ENCODE measurements at regions of chr10 and their contacts with region 1.

Region 1: DNA sequence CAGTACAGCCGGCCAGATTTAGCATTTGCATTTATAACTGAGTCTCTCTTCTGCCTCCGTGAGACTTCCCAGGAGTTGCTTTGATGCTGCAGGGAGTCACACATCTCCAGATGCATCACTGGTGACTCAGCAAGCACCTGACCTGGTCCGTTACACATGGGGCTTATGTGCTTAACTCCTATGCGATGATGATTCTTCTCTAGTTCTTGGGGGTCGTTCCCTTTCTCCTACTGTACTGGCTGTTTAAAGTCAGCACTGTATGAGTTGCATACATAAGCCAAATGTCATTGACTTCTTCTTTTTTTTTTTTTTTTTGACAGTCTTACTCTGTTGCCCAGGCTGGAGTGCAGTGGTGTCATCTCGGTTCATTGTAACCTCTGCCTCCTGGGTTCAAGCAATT is 13.0 kb upstream of the AKR1E2 start:
- DNase-seq: no peak
- ATAC-seq: no peak
- H3K4me3 ChIP-seq: no peak overlapping the region
- H3K27ac ChIP-seq: no peak overlapping the region
- H3K4me1 ChIP-seq: no peaks in the 10 kb centered on the region
- H3K27me3 ChIP-seq: no peaks in the 10 kb centered on the region

Region 2: DNA sequence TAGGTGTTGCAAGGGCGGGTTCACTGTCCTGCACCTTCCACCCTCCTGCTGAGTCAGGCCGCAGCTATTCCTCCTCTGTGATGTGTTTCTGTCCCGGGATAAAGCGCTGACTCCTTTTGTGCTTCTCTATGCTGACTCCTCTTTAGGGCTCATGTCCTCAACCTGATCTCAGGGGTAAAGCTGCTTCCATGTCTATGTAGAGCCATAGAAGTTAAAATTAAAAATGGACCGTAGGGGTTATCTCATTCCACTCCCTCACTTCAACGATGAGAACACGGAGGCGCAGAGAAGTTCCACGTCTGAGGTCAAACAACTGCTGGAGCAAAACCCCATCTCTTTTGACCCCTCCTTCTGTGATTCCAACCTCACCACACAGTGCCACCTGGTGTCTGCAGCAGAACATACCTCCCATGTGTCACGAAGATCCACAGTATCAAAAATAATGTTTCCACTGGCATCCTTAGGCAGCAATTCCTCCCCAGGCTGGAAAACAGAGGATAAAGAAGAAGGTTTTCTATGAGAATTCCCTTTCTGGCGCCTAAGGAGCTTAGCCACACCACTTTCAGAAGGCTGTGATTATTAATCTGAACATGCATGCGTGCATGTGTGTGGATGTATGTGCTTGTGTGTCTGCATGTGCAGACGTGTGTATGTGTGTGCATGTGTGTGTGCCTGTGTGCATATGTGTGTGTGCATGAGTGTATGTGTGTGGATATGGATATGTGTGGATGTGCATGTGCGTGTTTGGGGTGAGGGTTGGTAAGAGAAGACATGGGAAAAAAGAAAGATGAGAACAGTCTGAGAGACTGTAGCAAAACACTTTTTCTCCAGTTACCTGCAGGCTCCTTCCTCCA is 470.5 kb after region 1 on chr10:
- intact Hi-C with region 1: loop called in 1 of 2 experiments (anchors 10 kb)
- DNase-seq: peak; percentile 79 to 80
- ATAC-seq: peak; percentile 84
- H3K4me3 ChIP-seq: no peak overlapping the region
- H3K27ac ChIP-seq: no peak overlapping the region
- H3K4me1 ChIP-seq: peaks cover 0 to 4% of the 10 kb centered on the region in 2 donors
- H3K27me3 ChIP-seq: no peaks in the 10 kb centered on the region

Region 3: DNA sequence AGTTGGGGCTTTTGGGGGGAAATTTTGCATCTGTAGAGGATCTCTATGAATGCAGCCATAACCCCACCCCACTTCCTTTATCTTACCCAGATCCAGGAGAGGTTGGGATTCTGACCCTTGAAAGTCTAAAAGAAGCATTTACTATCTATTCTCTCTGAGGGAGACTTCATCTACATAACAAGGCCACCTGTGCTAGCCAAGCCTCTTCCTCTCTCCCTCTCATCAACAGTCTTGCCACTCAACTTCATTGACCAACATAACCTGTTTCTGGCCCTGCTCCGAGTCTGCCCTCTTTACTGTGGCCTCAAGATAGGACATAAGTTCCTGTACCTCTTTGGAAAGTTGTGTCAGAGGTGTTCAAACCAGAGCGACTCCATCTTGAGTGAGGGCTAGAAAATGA is 572.2 kb after region 1 on chr10:
- intact Hi-C with region 1: loop called in 1 of 2 experiments (anchors 10 kb)
- DNase-seq: no peak
- ATAC-seq: no peak
- H3K4me3 ChIP-seq: no peak overlapping the region
- H3K27ac ChIP-seq: no peak overlapping the region
- H3K4me1 ChIP-seq: no peaks in the 10 kb centered on the region
- H3K27me3 ChIP-seq: no peaks in the 10 kb centered on the region

Region 4: GRCh38 chr10:5873515-5873995 is 1060.5 kb after region 1 on chr10:
- intact Hi-C with region 1: loop called in 1 of 2 experiments (anchors 10 kb)
- DNase-seq: peak in 1 of 2 donors; percentile 70
- ATAC-seq: peak; percentile 88
- H3K4me3 ChIP-seq: no peak overlapping the region
- H3K27ac ChIP-seq: no peak overlapping the region
- H3K4me1 ChIP-seq: no peaks in the 10 kb centered on the region
- H3K27me3 ChIP-seq: no peaks in the 10 kb centered on the region